ENCODE measurements at regions of chr15 and their contacts with region 1.

Region 1: GRCh38 chr15:64841258-64842095 is at the start of gene PLEKHO2:
- DNase-seq: peak; percentile 46 to 94 (median 86)
- H3K4me3 ChIP-seq: peak within 1 kb of the TSS; percentile 54 to 94 (median 83)
- H3K27ac ChIP-seq: peak within 1 kb of the TSS; percentile 69 to 96 (median 90)
- H3K27me3 ChIP-seq: peaks cover 0 to 10% (median 0%) of the 10 kb centered on the region in 45 donors
- CTCF ChIP-seq: peak in 40 of 56 donors; percentile 7 to 56 (median 29)
- total RNA-seq, gene PLEKHO2: 11.7 to 57.7 (median 19.3) TPM

Region 2: GRCh38 chr15:64263567-64263966 is 577.9 kb before region 1 on chr15:
- intact Hi-C with region 1: no loop called
- DNase-seq: no peak
- H3K4me3 ChIP-seq: no peak overlapping the region
- H3K27ac ChIP-seq: no peak overlapping the region
- H3K27me3 ChIP-seq: no peaks in the 10 kb centered on the region
- CTCF ChIP-seq: no peak

Region 3: DNA sequence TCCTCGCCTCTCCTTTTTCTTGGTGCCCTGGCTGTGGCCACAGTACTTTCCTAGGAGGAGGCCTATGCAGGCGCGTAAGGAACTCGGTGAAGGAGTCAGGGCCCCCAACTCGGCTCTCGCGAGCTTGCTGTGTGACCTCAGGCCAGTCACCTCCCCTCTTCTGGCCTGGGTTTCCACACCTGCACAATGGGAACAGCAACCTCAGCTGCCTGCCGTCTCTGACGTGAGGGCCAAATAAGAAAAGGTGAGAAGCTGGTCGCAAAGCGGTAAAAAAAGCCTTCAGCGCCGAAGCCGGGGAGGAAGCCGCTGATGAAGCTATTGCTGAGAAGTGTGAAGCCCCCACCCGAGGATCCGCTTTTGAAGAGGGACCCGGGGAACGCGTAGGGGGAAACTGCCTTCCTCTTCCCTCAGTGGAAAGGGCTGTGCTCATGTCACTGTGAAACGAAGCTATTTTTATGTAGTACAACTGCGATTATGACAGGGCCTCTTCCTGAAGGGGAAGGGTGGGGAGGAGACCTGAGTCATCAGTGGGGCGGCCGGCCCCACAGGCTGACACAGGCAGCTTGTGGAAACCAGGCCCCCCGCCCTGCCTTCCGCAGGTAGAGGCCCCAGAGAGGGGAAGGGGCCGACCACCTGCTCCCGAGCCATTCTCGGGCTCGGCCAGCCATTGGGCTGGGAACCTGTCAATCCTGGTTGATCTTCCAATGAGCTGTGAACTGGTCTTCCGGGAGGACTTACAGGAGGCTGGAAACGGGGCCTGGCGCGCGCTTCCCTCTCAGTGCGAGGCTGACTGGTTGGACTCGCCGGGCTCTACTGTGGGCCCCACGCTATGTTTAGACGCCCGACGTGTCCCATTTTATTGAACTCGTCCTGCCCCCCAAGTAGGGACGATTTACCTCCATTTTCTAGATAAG is 52.3 kb after region 1 on chr15:
- intact Hi-C with region 1: loop called in 1 of 2 experiments (anchors 5 kb)
- DNase-seq: peak; percentile 62 to 93 (median 87)
- H3K4me3 ChIP-seq: peak overlapping the region in 58 of 59 donors; percentile 8 to 61 (median 42)
- H3K27ac ChIP-seq: peak overlapping the region in 55 of 59 donors; percentile 7 to 89 (median 75)
- H3K27me3 ChIP-seq: no peaks in the 10 kb centered on the region
- CTCF ChIP-seq: peak in 3 of 56 donors; percentile 9 to 32 (median 21)

Region 4: GRCh38 chr15:64989416-64990167 is 148.1 kb after region 1 on chr15 and contains the start of gene SPG21:
- intact Hi-C with region 1: loop called in 1 of 2 experiments (anchors 10 kb)
- DNase-seq: peak; percentile 77 to 95 (median 90)
- H3K4me3 ChIP-seq: peak within 1 kb of the TSS; percentile 57 to 99 (median 91)
- H3K27ac ChIP-seq: peak within 1 kb of the TSS; percentile 71 to 97 (median 92)
- H3K27me3 ChIP-seq: no peaks in the 10 kb centered on the region
- CTCF ChIP-seq: peak in 8 of 56 donors; percentile 10 to 36 (median 18)
- total RNA-seq, gene SPG21: 41.3 to 69.1 (median 50.6) TPM